ENCODE measurements at regions of chr3 and their contacts with region 1.

Region 1: GRCh38 chr3:24264748-24265158 is 229.9 kb downstream of the THRB start:
- DNase-seq: no peak
- H3K4me3 ChIP-seq: no peak overlapping the region
- H3K27ac ChIP-seq: no peak overlapping the region
- H3K4me1 ChIP-seq: no peaks in the 10 kb centered on the region
- H3K27me3 ChIP-seq: no peaks in the 10 kb centered on the region
- CTCF ChIP-seq: peak; percentile 66

Region 2: DNA sequence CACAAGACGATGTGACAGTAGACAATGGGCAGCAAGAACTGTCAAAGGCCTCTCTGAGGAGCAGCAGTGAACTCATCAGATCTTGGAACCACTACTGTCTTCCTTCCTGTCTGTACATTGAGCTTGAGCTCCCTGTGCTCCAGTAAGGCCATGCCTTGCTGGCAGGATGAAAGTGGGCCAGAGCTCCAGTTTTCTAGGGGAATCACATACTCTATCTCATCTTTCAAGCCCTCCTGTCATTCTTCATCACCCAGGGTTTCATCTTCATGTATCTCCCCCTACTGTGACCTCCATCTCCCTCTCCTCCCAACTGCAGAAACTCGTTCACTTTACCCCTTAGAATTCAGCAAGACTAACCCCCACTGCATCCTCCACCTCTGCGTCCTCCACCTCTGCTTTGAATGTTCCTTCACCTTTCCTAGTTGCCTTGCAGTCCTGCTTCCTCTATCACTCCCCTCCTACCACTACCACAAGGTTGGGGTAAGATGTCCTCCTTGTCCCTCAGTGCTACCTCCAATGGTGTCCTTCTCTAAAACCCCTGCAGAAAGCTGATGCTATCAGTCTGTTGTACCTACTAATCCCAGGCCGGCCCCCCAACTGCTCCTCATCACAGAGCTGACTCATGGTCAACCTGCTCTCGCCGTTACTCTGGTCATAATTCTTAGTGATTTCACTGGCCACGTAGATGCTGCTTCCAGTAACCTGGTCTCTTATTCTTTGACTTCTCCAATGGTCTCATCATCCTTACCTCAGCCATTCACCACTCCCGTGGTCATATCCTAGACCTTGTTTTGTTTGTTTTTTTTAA is 370.3 kb before region 1 on chr3:
- intact Hi-C with region 1: loop called (anchors 10 kb)
- DNase-seq: no peak
- H3K4me3 ChIP-seq: no peak overlapping the region
- H3K27ac ChIP-seq: no peak overlapping the region
- H3K4me1 ChIP-seq: no peaks in the 10 kb centered on the region
- H3K27me3 ChIP-seq: no peaks in the 10 kb centered on the region
- CTCF ChIP-seq: no peak

Region 3: DNA sequence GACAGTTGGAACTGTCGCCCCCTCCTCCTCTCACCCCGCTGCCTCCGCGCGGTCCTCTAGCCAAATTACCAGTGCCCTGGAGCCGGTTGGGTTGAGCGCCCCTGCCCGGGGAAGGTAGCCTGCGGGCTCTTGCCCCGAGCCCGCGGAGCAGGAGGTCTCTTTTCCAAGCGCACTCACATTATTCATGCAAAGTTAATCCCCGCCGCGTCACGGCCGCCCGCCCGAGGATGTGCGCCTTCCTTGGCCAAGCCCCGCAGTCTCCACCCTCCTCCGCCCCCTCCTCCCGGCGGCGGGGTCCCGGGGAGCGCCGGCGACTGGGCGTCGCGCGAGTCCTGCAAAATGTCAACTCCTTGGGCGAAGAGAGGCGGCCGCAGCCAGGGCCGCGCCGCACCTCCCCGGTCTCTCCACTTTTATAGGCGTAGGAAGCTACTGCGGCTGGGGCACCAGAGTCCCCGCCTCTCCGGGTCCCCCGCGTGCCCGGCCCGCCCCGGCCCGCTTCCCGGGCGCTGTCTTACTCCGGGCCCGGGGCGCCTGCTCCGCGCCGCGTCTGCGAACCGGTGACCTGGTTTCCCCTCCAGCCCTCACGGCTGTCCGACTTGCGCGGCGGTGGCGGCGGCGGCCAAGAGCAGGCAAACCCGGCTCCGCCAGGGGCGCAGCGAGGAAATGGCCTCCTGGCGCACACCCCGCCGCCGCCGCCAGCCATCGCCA is 230.0 kb after region 1 on chr3 and contains the start of gene THRB:
- intact Hi-C with region 1: loop called (anchors 10 kb)
- DNase-seq: peak; percentile 80
- H3K4me3 ChIP-seq: peak within 1 kb of the TSS; percentile 67
- H3K27ac ChIP-seq: peak within 1 kb of the TSS; percentile 97
- H3K4me1 ChIP-seq: peaks cover 6% of the 10 kb centered on the region
- H3K27me3 ChIP-seq: no peaks in the 10 kb centered on the region
- CTCF ChIP-seq: no peak
- total RNA-seq, gene THRB: 23.3 to 27.6 TPM

Region 4: DNA sequence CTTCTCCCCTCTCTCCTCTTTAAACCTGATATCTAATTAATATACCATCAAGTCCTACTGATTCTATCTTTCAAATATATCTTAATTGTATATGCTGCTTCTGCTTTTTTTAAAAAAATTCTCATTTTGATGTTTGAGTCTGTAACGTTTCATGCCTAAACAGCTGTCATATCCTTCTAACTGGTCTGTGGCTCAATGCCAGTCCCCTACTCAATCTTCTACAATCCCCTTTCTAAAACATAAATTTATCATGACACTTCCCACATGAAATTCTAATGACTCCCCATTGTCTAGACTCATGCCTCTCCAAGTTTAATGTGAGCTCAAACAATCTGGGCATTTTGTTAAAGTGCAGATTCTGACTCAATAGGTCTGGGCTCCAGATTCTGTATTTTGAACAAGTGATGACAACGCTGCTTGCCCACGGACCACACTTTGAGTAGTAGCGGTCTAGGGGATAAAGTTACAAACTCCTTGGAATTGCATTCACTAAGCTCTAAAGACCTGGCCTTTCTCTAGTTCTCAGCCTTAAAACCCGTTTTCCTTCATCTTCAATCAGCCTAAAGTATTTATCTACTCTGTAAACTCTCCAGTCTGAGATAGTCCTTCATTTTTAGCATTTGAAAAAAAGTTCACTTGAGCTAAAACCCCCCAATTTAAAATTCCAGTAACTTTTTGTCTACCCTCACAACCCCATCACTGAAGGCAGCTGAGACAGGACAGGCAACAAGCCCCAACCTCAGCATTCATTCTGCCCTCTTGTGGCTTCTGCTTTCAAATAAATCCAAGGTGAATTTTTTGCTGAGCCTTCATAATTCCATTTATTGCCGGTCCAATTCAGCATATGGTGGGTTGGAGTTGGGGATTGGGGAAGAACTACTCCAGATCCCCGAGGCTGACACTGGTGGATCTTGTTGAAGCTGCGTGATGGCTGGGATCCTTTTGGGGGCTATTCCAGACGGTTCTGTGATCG is 318.0 kb after region 1 on chr3:
- intact Hi-C with region 1: loop called (anchors 5 kb)
- DNase-seq: no peak
- H3K4me3 ChIP-seq: no peak overlapping the region
- H3K27ac ChIP-seq: no peak overlapping the region
- H3K4me1 ChIP-seq: no peaks in the 10 kb centered on the region
- H3K27me3 ChIP-seq: no peaks in the 10 kb centered on the region
- CTCF ChIP-seq: peak; percentile 16

Region 5: DNA sequence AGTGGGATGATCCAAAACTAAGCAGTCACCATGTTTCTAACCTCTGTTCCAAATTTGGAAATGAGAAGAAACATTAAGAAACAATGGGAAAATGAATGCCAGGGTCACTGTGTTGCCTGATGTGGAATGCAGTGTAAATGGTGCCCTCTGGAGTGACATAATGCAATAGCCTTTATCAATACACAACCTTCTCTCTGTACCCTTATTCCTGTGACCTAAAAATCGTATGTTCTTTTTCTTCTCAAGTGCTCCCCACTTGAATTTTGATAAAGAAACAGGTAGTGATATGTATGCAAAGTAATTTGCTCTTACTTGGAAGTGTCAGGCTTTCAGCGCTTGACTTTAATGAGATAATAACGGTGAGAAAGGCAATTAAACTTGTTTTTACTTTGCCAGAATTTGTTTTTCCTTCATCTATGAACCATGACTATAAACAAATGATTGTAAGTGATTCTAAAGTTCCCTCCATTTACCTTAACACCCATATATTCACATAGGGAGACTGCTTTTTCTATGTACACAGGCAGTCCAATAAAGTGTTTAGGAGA is 375.7 kb after region 1 on chr3:
- intact Hi-C with region 1: loop called (anchors 10 kb)
- DNase-seq: peak; percentile 27
- H3K4me3 ChIP-seq: no peak overlapping the region
- H3K27ac ChIP-seq: no peak overlapping the region
- H3K4me1 ChIP-seq: no peaks in the 10 kb centered on the region
- H3K27me3 ChIP-seq: no peaks in the 10 kb centered on the region
- CTCF ChIP-seq: peak; percentile 57

Measured in colonic mucosa (tissue), 4 donors.